Testis (tissue), 5 donors: ENCODE measurements at regions of chr17 and their contacts with region 1.

Region 1: GRCh38 chr17:70622368-70623260 is 453.3 kb downstream of the KCNJ2 start:
- DNase-seq: peak; percentile 31
- H3K4me3 ChIP-seq: no peak overlapping the region
- H3K27ac ChIP-seq: no peak overlapping the region
- H3K4me1 ChIP-seq: no peaks in the 10 kb centered on the region
- H3K27me3 ChIP-seq: no peaks in the 10 kb centered on the region
- CTCF ChIP-seq: peak in 1 of 3 experiments; percentile 17
- POLR2A ChIP-seq: no peak

Region 2: GRCh38 chr17:69574257-69575197 is 1048.1 kb before region 1 on chr17:
- intact Hi-C with region 1: loop called (anchors 5 kb)
- DNase-seq: no peak
- H3K4me3 ChIP-seq: no peak overlapping the region
- H3K27ac ChIP-seq: peak overlapping the region in 1 of 2 donors; percentile 67
- H3K4me1 ChIP-seq: no peaks in the 10 kb centered on the region
- H3K27me3 ChIP-seq: no peaks in the 10 kb centered on the region
- CTCF ChIP-seq: no peak
- POLR2A ChIP-seq: no peak